IMR-90 (cell line): ENCODE measurements at regions of chr7 and their contacts with region 1.

Region 1: GRCh38 chr7:81525841-81526240 is 244.0 kb downstream of the HGF start:
- DNase-seq: no peak
- ATAC-seq: no peak
- H3K4me3 ChIP-seq: no peak overlapping the region
- H3K27ac ChIP-seq: no peak overlapping the region
- H3K4me1 ChIP-seq: peaks cover 2% of the 10 kb centered on the region; the same call in 1 of the 2 replicates
- H3K27me3 ChIP-seq: no peaks in the 10 kb centered on the region
- CTCF ChIP-seq: no peak
- POLR2A ChIP-seq: no peak
- RAD21 ChIP-seq: no peak

Region 2: DNA sequence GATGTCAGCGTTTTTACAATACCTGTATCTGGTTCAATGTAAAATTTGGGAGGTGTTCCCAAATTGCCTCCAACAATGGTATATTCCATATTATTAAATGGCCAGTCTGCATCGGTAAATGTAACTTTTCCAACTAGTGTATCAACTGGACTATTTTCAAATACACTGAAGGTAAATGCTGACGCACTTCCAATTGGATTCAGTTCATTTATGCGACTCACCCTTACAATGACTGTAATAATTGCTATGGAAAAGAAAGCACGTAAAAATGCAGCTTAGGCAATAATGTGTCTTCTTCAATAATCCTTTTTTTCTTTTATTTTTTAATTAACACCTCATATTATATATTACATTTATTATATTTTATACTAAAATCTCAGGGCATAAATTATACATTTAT is 34.9 kb after region 1 on chr7:
- CTCF ChIA-PET with region 1: no interaction called
- POLR2A ChIA-PET with region 1: no interaction called
- dilution Hi-C with region 1: no loop called
- in situ Hi-C with region 1: no loop called
- intact Hi-C with region 1: loop called (anchors 1 kb)
- DNase-seq: no peak
- ATAC-seq: no peak
- H3K4me3 ChIP-seq: no peak overlapping the region
- H3K27ac ChIP-seq: no peak overlapping the region
- H3K4me1 ChIP-seq: peaks cover 2% of the 10 kb centered on the region; the same call in 1 of the 2 replicates
- H3K27me3 ChIP-seq: no peaks in the 10 kb centered on the region
- CTCF ChIP-seq: no peak
- POLR2A ChIP-seq: no peak
- RAD21 ChIP-seq: no peak

Region 3: GRCh38 chr7:81627536-81628287 is 101.9 kb after region 1 on chr7:
- CTCF ChIA-PET with region 1: no interaction called
- POLR2A ChIA-PET with region 1: no interaction called
- dilution Hi-C with region 1: no loop called
- in situ Hi-C with region 1: no loop called
- intact Hi-C with region 1: no loop called
- DNase-seq: peak; percentile 93
- ATAC-seq: peak; percentile 55; the same call in 1 of the 2 replicates
- H3K4me3 ChIP-seq: no peak overlapping the region
- H3K27ac ChIP-seq: peak overlapping the region; percentile 26; the same call in 1 of the 2 replicates
- H3K4me1 ChIP-seq: peaks cover 8% of the 10 kb centered on the region; the same call in 1 of the 2 replicates
- H3K27me3 ChIP-seq: no peaks in the 10 kb centered on the region
- CTCF ChIP-seq: no peak
- POLR2A ChIP-seq: no peak
- RAD21 ChIP-seq: no peak

Region 4: DNA sequence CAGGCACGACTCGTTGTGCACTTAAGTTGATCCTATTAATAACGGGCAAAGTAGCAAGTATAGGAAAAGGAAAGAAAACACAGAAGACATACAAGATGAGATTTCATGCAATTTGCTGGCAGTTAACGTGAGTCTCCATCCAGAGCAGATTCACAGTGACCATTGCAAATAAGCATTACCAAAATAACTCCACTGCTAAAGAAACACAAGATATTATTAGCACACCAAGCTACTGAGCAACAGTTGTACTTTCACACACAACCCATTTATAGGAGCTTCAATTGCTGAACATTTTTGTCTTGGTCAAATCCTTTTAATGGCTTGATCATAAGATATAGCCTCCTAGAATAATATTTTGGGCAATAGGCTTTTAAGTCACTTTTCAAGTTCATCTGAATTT is 431.7 kb after region 1 on chr7:
- CTCF ChIA-PET with region 1: no interaction called
- POLR2A ChIA-PET with region 1: no interaction called
- dilution Hi-C with region 1: no loop called
- in situ Hi-C with region 1: no loop called
- intact Hi-C with region 1: no loop called
- DNase-seq: no peak
- ATAC-seq: no peak
- H3K4me3 ChIP-seq: no peak overlapping the region
- H3K27ac ChIP-seq: no peak overlapping the region
- H3K4me1 ChIP-seq: no peaks in the 10 kb centered on the region
- H3K27me3 ChIP-seq: no peaks in the 10 kb centered on the region
- CTCF ChIP-seq: no peak
- POLR2A ChIP-seq: no peak
- RAD21 ChIP-seq: no peak